AG04449 (cell line): ENCODE measurements at regions of chr5 and their contacts with region 1.

Region 1: DNA sequence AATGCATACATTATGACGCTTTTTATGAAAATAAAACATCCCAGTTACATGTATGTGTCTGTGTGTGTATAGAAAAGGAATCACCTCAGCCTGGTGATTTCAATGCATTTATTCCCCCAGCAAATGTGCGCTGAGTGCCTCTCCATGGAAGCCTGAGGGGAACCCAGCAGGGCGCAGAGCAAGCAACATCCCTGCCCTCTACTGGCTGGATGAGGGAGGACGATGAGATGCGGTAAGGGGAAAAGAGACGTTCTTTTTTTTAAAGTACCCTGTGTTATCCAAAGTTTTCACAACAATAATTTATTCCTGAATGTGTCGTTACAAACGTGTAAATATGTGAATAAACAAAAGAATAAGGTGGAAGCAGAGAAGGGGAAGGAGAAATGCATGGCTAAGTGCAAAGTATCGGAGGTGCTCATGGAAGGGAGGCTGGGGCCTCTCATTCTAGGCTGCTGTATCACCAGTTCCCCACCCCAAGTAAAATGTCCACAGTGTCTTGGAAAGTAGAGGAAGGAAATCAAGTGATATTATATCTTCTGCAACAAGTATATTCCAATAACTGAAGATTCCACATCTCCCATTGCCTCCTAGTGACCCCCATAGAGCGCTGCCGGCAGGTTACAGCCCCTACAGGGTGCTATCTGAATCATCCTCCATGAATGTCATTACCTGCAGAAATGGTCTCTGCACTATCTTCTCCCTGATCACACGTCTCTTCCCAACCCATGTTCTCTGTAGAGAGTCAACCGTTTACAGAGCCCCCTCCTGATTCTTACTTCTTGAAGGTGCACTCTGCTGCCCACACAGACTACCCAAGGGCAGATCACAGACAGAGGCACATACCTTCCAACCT is 13.0 kb upstream of the ABLIM3 start:
- DNase-seq: no peak
- H3K4me3 ChIP-seq: no peak overlapping the region
- CTCF ChIP-seq: peak; percentile 86

Region 2: GRCh38 chr5:148740966-148741742 is 387.1 kb before region 1 on chr5:
- CTCF ChIA-PET with region 1: interaction called, 686 read pairs
- POLR2A ChIA-PET with region 1: no interaction called
- DNase-seq: peak; percentile 61
- H3K4me3 ChIP-seq: no peak overlapping the region
- CTCF ChIP-seq: peak; percentile 42

Region 3: GRCh38 chr5:148849461-148849860 is 278.8 kb before region 1 on chr5:
- CTCF ChIA-PET with region 1: no interaction called
- POLR2A ChIA-PET with region 1: no interaction called
- DNase-seq: no peak
- H3K4me3 ChIP-seq: no peak overlapping the region
- CTCF ChIP-seq: no peak

Region 4: GRCh38 chr5:149212198-149212951 is 84.1 kb after region 1 on chr5:
- CTCF ChIA-PET with region 1: interaction called, 14 read pairs
- POLR2A ChIA-PET with region 1: no interaction called
- DNase-seq: peak; percentile 98
- H3K4me3 ChIP-seq: no peak overlapping the region
- CTCF ChIP-seq: no peak

Region 5: DNA sequence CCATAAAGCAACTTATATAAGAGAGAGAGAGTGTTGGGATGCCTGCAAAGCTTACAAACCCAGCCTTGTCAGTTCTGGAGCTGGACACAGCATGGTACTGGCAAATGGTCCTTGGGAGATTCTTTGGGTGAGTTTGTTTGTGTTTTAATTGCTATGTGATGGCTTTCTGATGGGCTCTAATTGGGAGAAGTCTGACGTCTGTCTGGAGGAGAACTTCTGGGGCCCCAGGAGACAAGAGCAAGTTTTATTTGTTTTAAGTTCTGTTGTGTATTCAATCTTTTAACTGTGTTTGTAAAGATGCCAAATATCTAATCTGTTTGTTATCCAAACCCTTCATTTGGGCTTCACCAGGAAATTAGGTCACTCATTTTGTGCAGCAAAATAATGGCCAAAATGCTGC is 93.1 kb after region 1 on chr5:
- CTCF ChIA-PET with region 1: interaction called, 163 read pairs
- POLR2A ChIA-PET with region 1: no interaction called
- DNase-seq: no peak
- H3K4me3 ChIP-seq: no peak overlapping the region
- CTCF ChIP-seq: no peak

Region 6: DNA sequence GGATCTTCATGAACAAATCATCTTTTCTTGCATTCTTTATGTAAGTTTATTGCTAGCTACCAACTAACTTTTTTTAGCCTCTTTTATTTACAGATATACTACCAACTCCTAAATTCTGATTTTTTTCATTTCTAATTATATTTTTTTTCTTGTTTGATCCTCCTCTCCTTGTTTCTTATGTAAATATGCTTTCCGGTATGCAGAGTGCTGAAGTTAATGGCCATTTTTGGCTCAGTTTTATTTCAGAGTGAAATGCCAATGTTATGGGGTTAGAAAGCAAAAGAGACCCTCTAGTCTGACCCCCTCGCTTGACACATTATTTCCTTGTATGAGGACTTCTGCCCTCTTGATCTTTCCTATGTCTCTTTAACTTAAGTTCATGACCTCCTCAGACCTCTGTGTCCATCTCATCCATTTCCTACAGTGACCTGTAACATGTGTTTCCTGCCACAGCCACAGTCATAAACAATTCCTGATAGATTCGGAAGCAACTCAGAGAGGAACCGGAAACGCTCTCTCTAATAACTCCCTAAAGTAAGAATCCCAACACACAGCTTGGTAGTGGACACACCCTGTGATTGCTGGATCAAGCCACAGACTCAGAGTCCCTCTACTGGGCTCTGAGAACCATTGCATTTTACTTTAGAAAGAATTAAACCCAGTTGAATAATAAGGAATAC is 100.5 kb after region 1 on chr5:
- CTCF ChIA-PET with region 1: interaction called, 163 read pairs
- POLR2A ChIA-PET with region 1: no interaction called
- DNase-seq: peak; percentile 55
- H3K4me3 ChIP-seq: no peak overlapping the region
- CTCF ChIP-seq: peak; percentile 67

Region 7: GRCh38 chr5:149240354-149240998 is 112.2 kb after region 1 on chr5:
- CTCF ChIA-PET with region 1: interaction called, 71 read pairs
- POLR2A ChIA-PET with region 1: no interaction called
- DNase-seq: no peak
- H3K4me3 ChIP-seq: no peak overlapping the region
- CTCF ChIP-seq: no peak

Region 8: DNA sequence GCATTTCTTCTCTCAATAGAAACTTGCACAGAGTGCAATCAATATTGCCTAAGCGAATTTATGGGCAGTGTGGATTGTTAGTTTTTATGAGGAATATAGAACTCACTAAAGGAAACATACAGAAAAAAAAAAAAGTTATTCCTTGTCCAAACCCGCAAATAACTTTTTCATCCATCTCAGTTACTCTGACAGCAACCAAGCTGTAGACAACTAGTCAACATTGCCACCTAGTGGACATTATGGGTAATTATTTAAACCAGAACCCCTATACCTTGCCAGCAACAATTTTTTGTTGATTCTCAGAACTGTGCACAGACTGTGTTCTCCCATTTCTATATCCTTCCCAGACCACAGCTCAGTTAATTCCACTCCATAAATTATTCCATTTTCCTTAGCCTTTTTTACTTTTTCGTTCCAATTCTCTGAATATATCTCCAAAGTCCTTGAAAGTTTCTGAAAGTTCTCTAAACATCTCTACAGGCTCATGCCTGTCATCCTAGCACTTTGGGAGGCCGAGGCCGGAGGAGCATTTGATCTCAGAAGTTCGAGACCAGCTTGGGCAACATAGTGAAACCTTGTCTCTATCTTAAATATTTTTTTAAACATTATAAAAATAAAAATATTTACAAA is 140.8 kb after region 1 on chr5:
- CTCF ChIA-PET with region 1: interaction called, 28 read pairs
- POLR2A ChIA-PET with region 1: no interaction called
- DNase-seq: no peak
- H3K4me3 ChIP-seq: no peak overlapping the region
- CTCF ChIP-seq: peak; percentile 36